Esophagus muscularis mucosa (tissue), 4 donors: ENCODE measurements at regions of chr3 and their contacts with region 1.

Region 1: GRCh38 chr3:172461530-172462138 is 13.4 kb upstream of the GHSR start:
- DNase-seq: no peak
- H3K4me3 ChIP-seq: no peak overlapping the region
- H3K27ac ChIP-seq: no peak overlapping the region
- H3K4me1 ChIP-seq: peaks cover 0 to 10% (median 8%) of the 10 kb centered on the region in 4 donors
- H3K27me3 ChIP-seq: peaks cover 0 to 6% (median 0%) of the 10 kb centered on the region in 4 donors
- CTCF ChIP-seq: peak; percentile 51 to 83 (median 67)
- EP300 ChIP-seq: no peak
- POLR2A ChIP-seq: no peak

Region 2: GRCh38 chr3:172367205-172368105 is 94.2 kb before region 1 on chr3:
- intact Hi-C with region 1: loop called (anchors 10 kb)
- DNase-seq: no peak
- H3K4me3 ChIP-seq: no peak overlapping the region
- H3K27ac ChIP-seq: no peak overlapping the region
- H3K4me1 ChIP-seq: peaks cover 8 to 33% (median 21%) of the 10 kb centered on the region in 4 donors
- H3K27me3 ChIP-seq: no peaks in the 10 kb centered on the region
- CTCF ChIP-seq: no peak
- EP300 ChIP-seq: no peak
- POLR2A ChIP-seq: no peak

Region 3: GRCh38 chr3:172530566-172530965 is 68.9 kb after region 1 on chr3:
- intact Hi-C with region 1: no loop called
- DNase-seq: no peak
- H3K4me3 ChIP-seq: no peak overlapping the region
- H3K27ac ChIP-seq: no peak overlapping the region
- H3K4me1 ChIP-seq: no peaks in the 10 kb centered on the region
- H3K27me3 ChIP-seq: no peaks in the 10 kb centered on the region
- CTCF ChIP-seq: no peak
- EP300 ChIP-seq: no peak
- POLR2A ChIP-seq: no peak